ENCODE measurements at regions of chr1 and their contacts with region 1.

Region 1: DNA sequence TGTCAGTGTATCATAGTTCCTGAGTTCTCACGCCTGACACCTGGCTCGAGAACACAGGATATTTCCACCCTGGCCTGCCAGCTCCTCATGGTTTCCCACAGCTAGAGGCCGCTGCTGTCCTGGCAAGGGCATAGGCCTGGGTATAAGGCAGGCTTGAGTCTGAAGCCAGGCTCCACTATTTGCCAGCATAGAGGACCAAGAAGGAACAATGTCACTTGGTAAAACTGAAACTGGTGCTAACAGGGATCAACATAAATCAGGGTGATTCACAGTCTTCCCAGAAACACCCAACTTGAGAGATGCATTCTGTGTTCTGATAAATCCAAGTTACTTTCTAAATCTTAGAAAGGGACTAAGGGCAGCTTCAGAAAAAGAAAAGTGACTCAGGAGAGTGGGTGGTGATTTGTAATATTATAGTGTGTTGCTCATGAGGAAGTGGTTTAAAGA is 6.9 kb upstream of the S100A2 start:
- DNase-seq: peak; percentile 91 to 92
- H3K4me3 ChIP-seq: no peak overlapping the region
- H3K27ac ChIP-seq: peak overlapping the region; percentile 44 to 81 (median 68)
- H3K4me1 ChIP-seq: peaks cover 17 to 50% (median 26%) of the 10 kb centered on the region in 4 donors
- H3K27me3 ChIP-seq: no peaks in the 10 kb centered on the region
- CTCF ChIP-seq: peak in 6 of 7 experiments; percentile 22 to 97 (median 76)
- EP300 ChIP-seq: no peak
- POLR2A ChIP-seq: no peak

Region 2: GRCh38 chr1:153100236-153100635 is 472.4 kb before region 1 on chr1:
- intact Hi-C with region 1: no loop called
- DNase-seq: no peak
- H3K4me3 ChIP-seq: no peak overlapping the region
- H3K27ac ChIP-seq: no peak overlapping the region
- H3K4me1 ChIP-seq: no peaks in the 10 kb centered on the region
- H3K27me3 ChIP-seq: no peaks in the 10 kb centered on the region
- CTCF ChIP-seq: no peak
- EP300 ChIP-seq: no peak
- POLR2A ChIP-seq: no peak

Region 3: GRCh38 chr1:153510984-153511410 is 61.6 kb before region 1 on chr1:
- intact Hi-C with region 1: loop called (anchors 5 kb)
- DNase-seq: peak; percentile 86 to 93
- H3K4me3 ChIP-seq: no peak overlapping the region
- H3K27ac ChIP-seq: peak overlapping the region in 1 of 5 donors; percentile 36
- H3K4me1 ChIP-seq: peaks cover 13 to 38% (median 22%) of the 10 kb centered on the region in 4 donors
- H3K27me3 ChIP-seq: no peaks in the 10 kb centered on the region
- CTCF ChIP-seq: peak in 5 of 7 experiments; percentile 71 to 93 (median 90)
- EP300 ChIP-seq: no peak
- POLR2A ChIP-seq: no peak

Region 4: GRCh38 chr1:153532769-153533599 is 39.6 kb before region 1 on chr1:
- intact Hi-C with region 1: loop called (anchors 5 kb)
- DNase-seq: peak; percentile 88 to 96
- H3K4me3 ChIP-seq: peak overlapping the region; percentile 55 to 78 (median 76)
- H3K27ac ChIP-seq: peak overlapping the region; percentile 91 to 99 (median 99)
- H3K4me1 ChIP-seq: peaks cover 46 to 53% (median 50%) of the 10 kb centered on the region in 4 donors
- H3K27me3 ChIP-seq: no peaks in the 10 kb centered on the region
- CTCF ChIP-seq: peak in 5 of 7 experiments; percentile 81 to 93 (median 85)
- EP300 ChIP-seq: no peak
- POLR2A ChIP-seq: no peak

Region 5: GRCh38 chr1:153608742-153609584 is 36.4 kb after region 1 on chr1:
- intact Hi-C with region 1: loop called (anchors 5 kb)
- DNase-seq: peak; percentile 67 to 92
- H3K4me3 ChIP-seq: peak overlapping the region; percentile 27 to 67 (median 34)
- H3K27ac ChIP-seq: peak overlapping the region; percentile 68 to 90 (median 88)
- H3K4me1 ChIP-seq: peaks cover 43 to 58% (median 53%) of the 10 kb centered on the region in 4 donors
- H3K27me3 ChIP-seq: no peaks in the 10 kb centered on the region
- CTCF ChIP-seq: no peak
- EP300 ChIP-seq: no peak
- POLR2A ChIP-seq: no peak

Region 6: DNA sequence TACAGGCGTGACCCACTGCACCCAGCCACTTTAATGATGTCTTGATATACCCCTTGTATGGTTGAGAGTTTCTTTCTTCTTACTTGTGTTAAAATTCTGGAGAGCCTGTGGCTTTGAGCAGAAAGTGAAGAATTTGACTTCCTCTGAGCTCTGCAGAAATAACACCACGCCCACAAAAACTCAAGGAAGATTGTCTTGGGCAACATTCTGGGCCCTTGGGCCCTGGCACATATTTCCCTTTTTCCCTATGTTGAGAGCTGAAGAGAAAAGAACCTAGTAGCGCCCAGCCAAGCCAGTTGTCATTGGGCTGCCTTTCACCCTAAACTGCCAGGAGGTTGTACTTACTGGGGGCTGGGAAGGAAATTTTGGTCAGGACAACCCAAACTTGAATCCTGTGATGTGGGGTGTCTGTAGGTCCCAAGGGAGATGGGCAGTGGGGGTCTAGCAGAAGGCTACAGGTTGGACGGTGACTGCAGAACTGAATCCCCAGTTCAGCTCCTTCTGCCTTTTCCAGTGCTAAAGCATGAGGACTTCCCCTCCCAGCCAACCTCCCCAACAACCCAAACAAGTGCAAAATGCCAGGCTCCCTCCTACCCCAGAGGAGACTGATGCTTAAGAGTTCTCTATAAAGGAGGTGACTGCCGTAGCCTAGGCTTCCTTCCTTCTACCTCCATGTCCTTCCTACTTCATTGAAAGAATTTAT is 74.2 kb after region 1 on chr1:
- intact Hi-C with region 1: no loop called
- DNase-seq: no peak
- H3K4me3 ChIP-seq: no peak overlapping the region
- H3K27ac ChIP-seq: peak overlapping the region in 4 of 5 donors; percentile 2 to 84 (median 38)
- H3K4me1 ChIP-seq: peaks cover 15 to 68% (median 48%) of the 10 kb centered on the region in 4 donors
- H3K27me3 ChIP-seq: no peaks in the 10 kb centered on the region
- CTCF ChIP-seq: no peak
- EP300 ChIP-seq: no peak
- POLR2A ChIP-seq: no peak